Left colon (tissue), 2 donors: ENCODE measurements at regions of chr18 and their contacts with region 1.

Region 1: DNA sequence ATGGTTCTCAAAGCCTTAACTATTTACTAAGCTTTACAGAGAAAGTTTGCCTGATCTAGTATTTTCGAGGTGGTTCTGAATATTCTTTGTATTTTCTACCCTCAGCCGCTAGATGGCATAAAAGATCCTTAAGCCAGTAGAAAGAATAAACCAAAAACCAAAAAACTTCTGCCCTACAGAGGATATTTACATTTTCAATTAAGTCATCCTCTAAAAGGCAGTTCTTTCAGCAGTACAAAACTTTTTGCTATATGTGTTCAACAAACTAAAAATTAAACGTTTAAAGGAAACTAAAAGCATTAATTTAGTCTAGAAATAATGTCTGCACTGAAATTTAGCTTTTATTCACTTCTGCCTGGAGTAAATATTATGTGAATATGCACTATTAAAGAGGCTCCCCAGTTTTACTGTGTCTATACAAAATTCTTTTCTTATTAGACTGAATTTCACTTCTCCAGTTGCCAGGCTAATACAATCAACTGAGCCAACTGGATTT is 297.5 kb downstream of the PIEZO2 start:
- DNase-seq: no peak
- ATAC-seq: no peak

Region 2: GRCh38 chr18:10979411-10979810 is 127.5 kb after region 1 on chr18:
- intact Hi-C with region 1: no loop called
- DNase-seq: no peak
- ATAC-seq: no peak

Region 3: DNA sequence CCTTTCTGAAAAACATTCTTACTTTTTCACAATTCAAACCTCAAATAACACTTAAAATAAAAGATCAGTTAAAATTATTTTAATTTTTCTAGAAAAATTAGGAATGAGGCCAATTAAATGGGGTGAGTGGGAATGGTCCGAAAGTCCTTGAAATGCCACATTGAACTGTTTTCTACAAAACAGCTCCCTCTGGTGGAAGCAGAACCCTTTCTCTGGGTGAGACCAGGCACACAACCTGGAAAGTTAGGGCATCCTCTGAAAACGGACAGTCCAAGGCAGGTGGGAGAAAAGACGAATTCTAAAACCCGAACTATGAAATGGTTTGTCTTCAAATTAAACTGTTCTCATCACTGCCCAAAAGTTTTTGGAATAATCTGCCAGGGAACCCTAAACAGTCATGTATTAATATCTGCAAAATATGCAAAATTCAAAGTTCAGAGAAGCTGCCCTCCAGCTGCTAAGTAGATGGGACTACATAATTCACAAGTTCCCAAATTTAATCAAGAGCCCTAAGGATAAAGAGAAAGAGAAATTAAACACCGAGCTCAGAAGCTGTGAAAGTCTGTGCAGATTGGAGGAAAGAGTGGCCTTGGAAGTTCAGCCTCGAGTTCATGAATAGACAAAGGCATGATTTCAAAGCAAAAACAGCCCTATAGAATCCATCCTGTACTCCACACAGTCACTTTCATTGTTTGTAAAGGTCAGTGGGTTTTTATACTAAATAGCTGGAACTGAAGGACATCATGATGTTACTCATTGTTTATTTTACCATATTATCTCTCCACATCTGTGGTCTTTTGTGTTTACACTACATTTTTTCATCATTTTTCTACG is 189.2 kb after region 1 on chr18:
- intact Hi-C with region 1: loop called in 1 of 2 experiments (anchors 2 kb)
- DNase-seq: peak; percentile 33 to 39
- ATAC-seq: peak; percentile 47